Naive thymus-derived CD4-positive, alpha-beta T cell (primary cell): ENCODE measurements at regions of chr4 and their contacts with region 1.

Region 1: DNA sequence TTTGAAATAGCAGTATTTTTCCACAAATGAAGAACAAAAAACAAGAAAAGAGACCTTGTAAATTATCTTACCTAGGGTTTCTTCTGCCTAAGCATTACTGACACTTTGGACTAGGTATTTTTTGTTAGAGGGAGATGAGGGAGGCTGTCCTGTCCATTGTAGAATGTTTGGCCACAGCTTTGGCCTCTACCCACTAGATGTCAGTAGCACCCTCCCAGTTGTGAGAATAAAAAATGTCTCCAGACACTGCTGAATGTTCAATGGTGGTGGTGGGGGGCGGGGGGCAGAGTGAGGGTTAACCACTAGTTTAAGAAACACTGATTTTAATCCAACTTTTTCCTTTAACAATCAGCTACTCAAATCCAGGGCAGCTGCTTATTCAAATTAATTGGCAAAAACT is 25.8 kb downstream of the OTUD4 start:
- DNase-seq: peak in 1 of 9 donors; percentile 11
- ATAC-seq: peak; percentile 45
- H3K4me3 ChIP-seq: no peak overlapping the region
- H3K4me3 Mint-ChIP-seq: no peak overlapping the region
- H3K27ac ChIP-seq: no peak overlapping the region
- H3K27ac Mint-ChIP-seq: peak overlapping the region in 1 of 9 donors; percentile 38
- H3K4me1 ChIP-seq: no peaks in the 10 kb centered on the region
- H3K4me1 Mint-ChIP-seq: peaks cover 0 to 26% (median 4%) of the 10 kb centered on the region in 7 donors
- H3K27me3 ChIP-seq: no peaks in the 10 kb centered on the region
- H3K27me3 Mint-ChIP-seq: no peaks in the 10 kb centered on the region

Region 2: GRCh38 chr4:145168581-145169187 is 14.1 kb after region 1 on chr4:
- CTCF ChIA-PET with region 1: no interaction called
- POLR2A ChIA-PET with region 1: no interaction called
- intact Hi-C with region 1: loop called in 1 of 2 experiments (anchors 2 kb)
- DNase-seq: no peak
- ATAC-seq: no peak
- H3K4me3 ChIP-seq: no peak overlapping the region
- H3K4me3 Mint-ChIP-seq: no peak overlapping the region
- H3K27ac ChIP-seq: no peak overlapping the region
- H3K27ac Mint-ChIP-seq: peak overlapping the region in 2 of 9 donors; percentile 10 to 41
- H3K4me1 ChIP-seq: no peaks in the 10 kb centered on the region
- H3K4me1 Mint-ChIP-seq: peaks cover 5 to 36% (median 23%) of the 10 kb centered on the region in 7 donors
- H3K27me3 ChIP-seq: no peaks in the 10 kb centered on the region
- H3K27me3 Mint-ChIP-seq: no peaks in the 10 kb centered on the region